T-cell (primary cell): ENCODE measurements at regions of chr10 and their contacts with region 1.

Region 1: DNA sequence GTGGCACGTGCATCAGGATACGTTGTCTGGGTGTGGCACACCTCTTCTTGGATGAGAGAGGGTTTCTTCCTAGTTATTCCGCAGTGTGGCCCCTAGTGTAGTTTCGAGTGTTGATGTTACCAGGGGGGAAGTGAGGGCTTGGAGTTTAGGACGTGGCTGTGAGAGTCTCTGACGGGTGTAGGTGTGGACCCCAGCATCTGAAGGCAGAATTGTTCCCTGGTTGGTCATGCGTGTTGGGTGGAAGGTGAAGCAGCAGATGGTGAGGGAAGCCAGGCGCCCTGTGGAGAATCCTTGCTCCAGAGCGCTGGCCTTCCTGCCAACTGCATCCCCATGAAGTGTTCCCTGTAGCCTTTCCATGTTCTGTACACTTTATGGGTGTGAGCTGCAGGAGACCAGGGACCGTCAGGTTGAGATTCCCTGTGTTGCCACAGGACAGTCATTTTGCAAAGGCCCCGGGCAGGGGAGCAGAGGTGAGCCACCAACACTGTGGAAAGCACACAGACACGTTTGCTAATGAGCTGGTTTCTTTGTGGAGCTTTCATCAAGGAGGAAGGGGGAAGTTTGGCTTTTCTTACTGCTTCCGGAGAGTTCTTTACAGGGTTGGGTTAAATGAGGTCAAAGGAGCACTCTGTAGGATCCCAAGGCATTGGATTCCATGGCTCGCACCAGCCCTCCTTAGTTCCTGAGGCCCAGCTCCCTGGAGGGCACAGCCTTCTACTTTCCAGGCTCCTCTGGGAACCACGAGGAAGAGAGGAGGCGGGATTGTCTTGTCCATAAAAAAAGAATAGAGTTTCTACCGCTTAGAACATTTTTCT is 32.0 kb downstream of the TSPAN14 start:
- DNase-seq: peak in 1 of 35 experiments; percentile 62
- ATAC-seq: peak in 3 of 4 experiments; percentile 13 to 41 (median 14)
- H3K4me3 ChIP-seq: peak overlapping the region; percentile 3 to 39
- H3K4me3 Mint-ChIP-seq: peak overlapping the region; percentile 57 to 68 (median 57)
- H3K27ac ChIP-seq: peak overlapping the region; percentile 74
- H3K27ac Mint-ChIP-seq: peak overlapping the region; percentile 86 to 94
- H3K4me1 ChIP-seq: peaks cover 79 to 94% of the 10 kb centered on the region in 2 experiments
- H3K4me1 Mint-ChIP-seq: peaks cover 93 to 98% (median 97%) of the 10 kb centered on the region in 3 donors
- H3K27me3 ChIP-seq: no peaks in the 10 kb centered on the region
- H3K27me3 Mint-ChIP-seq: no peaks in the 10 kb centered on the region

Region 2: DNA sequence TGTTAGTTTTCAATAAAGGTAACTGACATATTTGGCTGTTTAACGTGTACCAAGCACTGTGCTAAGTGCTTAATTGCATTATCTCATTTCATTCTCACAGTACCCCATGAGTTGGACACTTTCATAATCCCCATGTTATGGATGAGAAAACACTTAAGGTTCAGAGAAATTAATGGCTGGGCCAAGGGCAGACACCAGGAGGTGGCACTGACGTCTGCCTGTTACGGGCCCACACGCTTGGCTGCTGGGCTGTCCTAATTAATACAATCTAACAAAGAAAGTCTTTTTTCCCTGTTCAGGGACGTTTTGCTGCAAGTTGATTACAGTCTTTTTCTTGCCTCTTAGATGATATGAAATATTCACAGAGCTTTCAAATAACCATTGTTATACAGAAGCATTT is 113.5 kb before region 1 on chr10:
- CTCF ChIA-PET with region 1: interaction called in 1 of 2 experiments, 13 read pairs
- POLR2A ChIA-PET with region 1: no interaction called
- DNase-seq: no peak
- ATAC-seq: no peak
- H3K4me3 ChIP-seq: no peak overlapping the region
- H3K4me3 Mint-ChIP-seq: no peak overlapping the region
- H3K27ac ChIP-seq: no peak overlapping the region
- H3K27ac Mint-ChIP-seq: no peak overlapping the region
- H3K4me1 ChIP-seq: no peaks in the 10 kb centered on the region
- H3K4me1 Mint-ChIP-seq: peaks cover 0 to 5% (median 0%) of the 10 kb centered on the region in 3 donors
- H3K27me3 ChIP-seq: no peaks in the 10 kb centered on the region
- H3K27me3 Mint-ChIP-seq: peaks cover 3 to 7% of the 10 kb centered on the region in 2 donors

Region 3: GRCh38 chr10:80464557-80465450 is 21.4 kb before region 1 on chr10:
- CTCF ChIA-PET with region 1: interaction called, 4 to 10 read pairs
- POLR2A ChIA-PET with region 1: interaction called, 4 to 9 read pairs
- DNase-seq: peak in 3 of 35 experiments; percentile 32 to 52 (median 32)
- ATAC-seq: peak in 3 of 4 experiments; percentile 15 to 17 (median 15)
- H3K4me3 ChIP-seq: peak overlapping the region; percentile 26 to 53
- H3K4me3 Mint-ChIP-seq: peak overlapping the region in 2 of 3 donors; percentile 78 to 79
- H3K27ac ChIP-seq: peak overlapping the region; percentile 82
- H3K27ac Mint-ChIP-seq: peak overlapping the region; percentile 95 to 99
- H3K4me1 ChIP-seq: peaks cover 68 to 100% of the 10 kb centered on the region in 2 experiments
- H3K4me1 Mint-ChIP-seq: peaks cover 98 to 99% (median 99%) of the 10 kb centered on the region in 3 donors
- H3K27me3 ChIP-seq: no peaks in the 10 kb centered on the region
- H3K27me3 Mint-ChIP-seq: no peaks in the 10 kb centered on the region